PC-3 (cell line): ENCODE measurements at regions of chr7 and their contacts with region 1.

Region 1: DNA sequence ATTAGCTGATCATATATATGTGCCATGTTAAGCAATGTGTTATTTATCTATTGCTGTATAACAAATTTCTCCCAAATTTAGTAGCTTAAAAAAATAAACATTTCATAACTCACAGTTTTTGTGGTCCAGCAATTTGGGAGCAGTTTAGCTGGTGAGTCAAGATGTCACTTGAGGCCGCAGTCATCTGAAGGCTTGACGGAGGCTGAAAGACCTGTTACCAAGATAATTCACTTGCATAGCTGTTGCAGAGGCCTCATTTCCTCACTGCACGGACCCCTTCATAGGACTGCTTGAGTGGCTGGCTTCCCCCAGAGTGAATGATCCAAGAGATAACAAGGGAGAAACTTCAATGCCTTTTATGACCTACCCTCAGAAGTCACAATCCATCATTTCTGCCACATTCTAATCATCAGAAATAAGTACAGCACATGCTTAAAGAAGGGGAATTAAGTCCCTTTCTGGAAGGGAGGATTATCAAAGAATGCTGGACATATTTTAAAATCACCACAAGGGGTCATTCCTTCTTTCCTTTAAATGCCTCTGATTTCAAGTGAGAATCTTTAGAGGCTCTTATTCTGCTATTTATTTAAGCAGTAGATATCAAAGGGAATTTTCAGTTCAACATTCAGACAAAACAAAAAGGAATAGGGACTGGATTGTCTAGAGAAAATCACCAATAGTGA is 10.5 kb upstream of the SRPK2 start:
- DNase-seq: peak; percentile 41
- ATAC-seq: peak; percentile 70
- H3K4me3 ChIP-seq: no peak overlapping the region
- H3K27ac ChIP-seq: no peak overlapping the region
- H3K4me1 ChIP-seq: no peaks in the 10 kb centered on the region; the same call in 1 of the 2 replicates
- H3K27me3 ChIP-seq: no peaks in the 10 kb centered on the region
- CTCF ChIP-seq: peak; percentile 58

Region 2: DNA sequence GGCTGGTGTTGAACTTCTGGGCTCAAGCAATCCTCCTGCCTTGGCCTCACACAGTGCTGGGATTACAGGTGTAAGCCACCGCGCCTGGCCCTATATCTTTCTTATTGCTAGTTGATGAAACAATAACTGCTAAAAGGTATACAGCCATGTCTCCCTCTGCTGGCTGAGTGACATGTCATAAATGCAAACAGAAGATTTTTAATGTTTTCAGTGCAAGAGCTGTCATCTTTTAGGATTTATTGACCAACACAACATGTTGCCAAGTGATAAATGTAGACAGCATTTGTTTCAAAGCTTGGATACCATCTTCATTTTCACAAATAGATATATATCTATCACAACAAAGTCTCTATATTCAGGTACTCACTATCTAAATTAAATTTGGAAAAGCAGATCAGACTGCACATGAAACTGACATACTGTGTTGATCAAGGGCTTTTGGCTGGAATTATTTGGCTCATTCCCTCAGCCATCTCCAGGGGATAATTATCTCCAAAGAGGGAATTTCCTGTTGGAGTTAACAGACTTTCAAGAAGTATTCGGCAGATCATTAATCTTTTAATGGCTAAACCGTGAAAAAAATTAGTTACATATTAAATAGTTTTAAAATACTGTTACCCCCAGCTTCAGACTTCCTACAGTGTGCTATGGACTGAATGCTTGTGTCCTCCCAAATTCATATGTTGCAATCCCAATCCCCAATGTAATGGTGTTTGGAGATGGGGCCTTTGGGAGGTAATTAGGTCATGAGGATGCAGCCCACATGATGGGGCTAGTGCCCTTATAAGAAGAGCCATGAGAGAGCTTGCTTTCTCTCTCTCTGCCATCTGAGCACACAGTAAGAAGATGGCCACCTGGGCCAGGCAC is 30.8 kb after region 1 on chr7:
- CTCF ChIA-PET with region 1: interaction called, 4 read pairs
- POLR2A ChIA-PET with region 1: no interaction called
- intact Hi-C with region 1: loop called (anchors 1 kb)
- DNase-seq: peak; percentile 72
- ATAC-seq: peak; percentile 82
- H3K4me3 ChIP-seq: no peak overlapping the region
- H3K27ac ChIP-seq: no peak overlapping the region
- H3K4me1 ChIP-seq: no peaks in the 10 kb centered on the region
- H3K27me3 ChIP-seq: no peaks in the 10 kb centered on the region
- CTCF ChIP-seq: peak; percentile 65

Region 3: GRCh38 chr7:105487579-105488571 is 88.7 kb after region 1 on chr7:
- CTCF ChIA-PET with region 1: no interaction called
- POLR2A ChIA-PET with region 1: no interaction called
- intact Hi-C with region 1: loop called (anchors 1 kb)
- DNase-seq: peak; percentile 58
- ATAC-seq: peak; percentile 99
- H3K4me3 ChIP-seq: no peak overlapping the region
- H3K27ac ChIP-seq: peak overlapping the region; percentile 71
- H3K4me1 ChIP-seq: peaks cover 9% of the 10 kb centered on the region
- H3K27me3 ChIP-seq: no peaks in the 10 kb centered on the region
- CTCF ChIP-seq: peak; percentile 66

Region 4: DNA sequence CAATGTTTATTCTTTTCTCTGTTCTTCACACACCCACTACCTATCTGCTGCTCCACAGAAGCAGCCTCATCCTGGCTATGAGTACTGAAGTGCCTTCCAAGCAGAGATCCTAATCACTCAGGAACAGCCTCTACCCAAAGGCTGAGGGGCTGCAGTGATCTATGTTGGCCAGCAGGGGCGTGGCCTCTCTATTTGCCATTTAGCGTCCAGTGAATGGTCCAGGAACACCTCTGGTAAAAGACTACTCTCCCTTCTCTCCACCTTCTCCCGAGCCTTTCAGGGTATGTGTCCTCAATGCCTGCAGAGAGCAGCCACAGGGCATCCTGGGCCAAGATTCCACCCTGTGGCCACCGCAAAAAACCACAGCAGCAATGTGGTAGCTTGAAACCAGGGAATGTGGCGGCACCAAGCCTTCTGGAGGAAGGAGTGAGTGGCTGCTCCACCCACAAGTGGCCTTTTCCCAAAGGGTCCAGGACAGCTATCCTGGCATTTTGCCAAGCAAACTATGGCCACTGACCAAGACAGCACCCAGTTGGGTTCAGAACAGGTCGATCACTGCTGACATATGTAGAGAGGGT is 642.0 kb after region 1 on chr7:
- CTCF ChIA-PET with region 1: no interaction called
- POLR2A ChIA-PET with region 1: no interaction called
- intact Hi-C with region 1: loop called (anchors 10 kb)
- DNase-seq: peak; percentile 79
- ATAC-seq: peak; percentile 66
- H3K4me3 ChIP-seq: no peak overlapping the region
- H3K27ac ChIP-seq: no peak overlapping the region
- H3K4me1 ChIP-seq: peaks cover 5% of the 10 kb centered on the region
- H3K27me3 ChIP-seq: no peaks in the 10 kb centered on the region
- CTCF ChIP-seq: peak; percentile 97